GM12878 (cell line): ENCODE measurements at regions of chr19 and their contacts with region 1.

Region 1: GRCh38 chr19:10219678-10220077 is 11.5 kb downstream of the S1PR2 start:
- DNase-seq: peak; percentile 88
- ATAC-seq: peak; percentile 87
- H3K4me3 ChIP-seq: no peak overlapping the region
- H3K27ac ChIP-seq: peak overlapping the region; percentile 92
- H3K4me1 ChIP-seq: peaks cover 42% of the 10 kb centered on the region
- H3K27me3 ChIP-seq: no peaks in the 10 kb centered on the region
- CTCF ChIP-seq: peak; percentile 71 to 73 (median 73)
- EP300 ChIP-seq: peak; percentile 31 to 91; a peak in 3 of 4 replicates
- POLR2A ChIP-seq: peak; percentile 14
- RAD21 ChIP-seq: peak; percentile 68

Region 2: DNA sequence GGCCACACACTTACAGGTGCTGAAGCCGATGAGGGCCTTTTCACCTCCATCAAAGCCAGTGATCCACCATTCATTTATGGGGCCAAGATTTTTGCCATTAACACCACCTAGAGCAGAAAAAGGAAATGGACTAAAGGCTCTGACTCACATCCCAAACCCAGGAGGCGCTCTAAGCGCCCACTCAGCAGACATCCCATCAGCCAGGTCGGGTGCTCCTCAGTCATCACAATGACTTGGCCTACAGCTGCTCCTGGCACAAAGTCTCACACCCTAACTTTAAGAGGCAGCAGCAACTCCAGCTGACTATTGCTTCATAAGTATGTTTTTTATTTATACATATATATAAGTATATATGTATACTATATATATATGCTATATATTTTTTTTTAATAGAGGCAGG is 63.8 kb before region 1 on chr19:
- CTCF ChIA-PET with region 1: no interaction called
- POLR2A ChIA-PET with region 1: no interaction called
- RAD21 ChIA-PET with region 1: no interaction called
- SMC1A ChIA-PET with region 1: no interaction called
- in situ Hi-C with region 1: no loop called
- intact Hi-C with region 1: no loop called
- DNase-seq: no peak
- ATAC-seq: no peak
- H3K4me3 ChIP-seq: no peak overlapping the region
- H3K27ac ChIP-seq: no peak overlapping the region
- H3K4me1 ChIP-seq: no peaks in the 10 kb centered on the region
- H3K27me3 ChIP-seq: no peaks in the 10 kb centered on the region
- CTCF ChIP-seq: no peak
- EP300 ChIP-seq: no peak
- POLR2A ChIP-seq: no peak
- RAD21 ChIP-seq: no peak

Region 3: DNA sequence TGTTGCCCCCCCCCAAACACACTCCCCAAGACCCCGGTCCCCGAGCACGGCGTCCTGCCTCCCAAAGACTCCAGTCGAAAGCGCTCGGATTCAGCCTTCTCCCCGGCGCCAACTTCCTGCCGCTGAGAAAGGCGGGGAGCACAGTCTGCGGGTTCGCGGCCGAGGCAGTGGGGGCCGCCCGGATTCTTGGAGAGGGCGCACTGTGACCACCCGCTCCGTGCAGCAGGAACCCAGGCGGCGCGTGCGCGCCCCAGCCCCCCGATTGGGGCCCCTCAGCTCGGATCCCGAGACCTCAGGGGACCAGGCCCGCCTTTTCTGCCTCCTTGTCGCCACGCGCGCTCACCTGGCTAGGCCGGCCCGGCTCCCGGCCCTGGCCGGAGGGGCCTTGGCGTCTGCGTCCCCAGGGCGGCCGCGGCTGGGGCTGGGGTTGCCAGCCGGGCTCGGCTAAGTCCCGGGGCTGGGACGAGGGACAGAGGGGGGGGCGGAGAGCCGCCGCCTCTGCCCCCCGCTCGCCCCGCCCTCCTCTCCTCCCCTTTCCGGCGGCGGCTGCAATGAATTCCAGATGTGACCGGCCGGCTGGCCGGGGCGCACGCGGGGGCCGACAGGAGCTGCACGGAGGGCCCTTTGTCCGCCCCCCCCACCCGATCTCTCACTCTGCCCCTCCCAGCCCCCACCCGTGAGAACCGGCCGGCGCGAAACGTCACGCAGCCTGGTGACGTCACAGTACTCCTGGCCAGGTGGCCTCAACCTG is 11.4 kb after region 1 on chr19 and contains the start of gene S1PR2:
- CTCF ChIA-PET with region 1: interaction called, 19 read pairs
- POLR2A ChIA-PET with region 1: interaction called, 11 read pairs
- RAD21 ChIA-PET with region 1: interaction called, 25 read pairs
- SMC1A ChIA-PET with region 1: interaction called, 3 read pairs
- in situ Hi-C with region 1: no loop called
- intact Hi-C with region 1: no loop called
- DNase-seq: no peak
- ATAC-seq: peak; percentile 67
- H3K4me3 ChIP-seq: peak within 1 kb of the TSS; percentile 90
- H3K27ac ChIP-seq: peak within 1 kb of the TSS; percentile 97
- H3K4me1 ChIP-seq: peaks cover 44% of the 10 kb centered on the region
- H3K27me3 ChIP-seq: no peaks in the 10 kb centered on the region
- CTCF ChIP-seq: 0 out of 6 replicates have a peak, but pooled peaks of 1 of the 3 experiments have one; percentile 19
- EP300 ChIP-seq: no peak
- POLR2A ChIP-seq: peak; percentile 81
- RAD21 ChIP-seq: no peak
- polyA plus RNA-seq, gene S1PR2: 4.9 to 9.6 TPM

Region 4: GRCh38 chr19:10238172-10238783 is 18.6 kb after region 1 on chr19:
- CTCF ChIA-PET with region 1: interaction called, 5 read pairs
- POLR2A ChIA-PET with region 1: interaction called, 11 read pairs
- RAD21 ChIA-PET with region 1: interaction called, 25 read pairs
- SMC1A ChIA-PET with region 1: interaction called, 8 read pairs
- in situ Hi-C with region 1: no loop called
- intact Hi-C with region 1: no loop called
- DNase-seq: no peak
- ATAC-seq: peak; percentile 47
- H3K4me3 ChIP-seq: no peak overlapping the region
- H3K27ac ChIP-seq: peak overlapping the region; percentile 54
- H3K4me1 ChIP-seq: peaks cover 57% of the 10 kb centered on the region
- H3K27me3 ChIP-seq: no peaks in the 10 kb centered on the region
- CTCF ChIP-seq: no peak
- EP300 ChIP-seq: no peak
- POLR2A ChIP-seq: no peak
- RAD21 ChIP-seq: no peak

Region 5: GRCh38 chr19:10245189-10245939 is 25.7 kb after region 1 on chr19:
- CTCF ChIA-PET with region 1: interaction called, 56 read pairs
- POLR2A ChIA-PET with region 1: interaction called, 8 read pairs
- RAD21 ChIA-PET with region 1: interaction called, 98 read pairs
- SMC1A ChIA-PET with region 1: interaction called, 78 read pairs
- in situ Hi-C with region 1: no loop called
- intact Hi-C with region 1: no loop called
- DNase-seq: no peak
- ATAC-seq: peak; percentile 74
- H3K4me3 ChIP-seq: no peak overlapping the region
- H3K27ac ChIP-seq: peak overlapping the region; percentile 55
- H3K4me1 ChIP-seq: peaks cover 54% of the 10 kb centered on the region
- H3K27me3 ChIP-seq: no peaks in the 10 kb centered on the region
- CTCF ChIP-seq: no peak
- EP300 ChIP-seq: no peak
- POLR2A ChIP-seq: no peak
- RAD21 ChIP-seq: no peak

Region 6: DNA sequence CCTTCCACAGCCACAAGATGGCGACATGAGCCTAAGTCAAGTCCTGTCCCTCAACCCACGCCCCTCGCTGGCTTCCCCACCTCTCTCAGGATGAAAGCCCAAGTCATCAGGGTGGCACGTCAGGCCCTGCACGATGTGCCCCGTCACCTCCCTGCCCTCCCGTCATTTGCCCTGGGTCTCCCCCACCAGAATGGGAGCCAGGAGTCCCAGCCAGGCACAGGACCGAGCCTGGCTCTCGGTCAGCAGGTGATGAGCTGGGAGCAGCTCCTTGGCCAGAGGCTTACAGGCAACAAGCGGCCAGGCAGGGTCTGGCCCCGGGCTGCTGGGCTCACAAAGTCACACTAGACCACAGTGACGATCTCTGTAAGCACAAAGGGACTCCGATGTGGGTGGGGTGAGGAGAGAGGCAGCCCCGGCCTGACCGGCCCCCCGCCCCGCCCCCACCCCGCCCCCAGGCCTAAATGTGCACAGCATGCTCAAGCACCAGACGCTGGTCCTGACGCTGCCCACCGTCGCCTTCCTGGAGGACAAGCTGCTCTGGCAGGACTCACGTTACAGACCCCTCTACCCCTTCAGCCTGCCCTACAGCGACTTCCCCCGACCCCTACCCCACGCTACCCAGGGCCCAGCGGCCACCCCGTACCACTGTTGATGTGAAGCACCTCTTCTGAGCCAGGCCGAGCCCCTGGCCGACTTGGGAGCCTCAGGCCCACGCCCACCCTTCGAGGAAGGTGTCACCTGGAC is 39.7 kb after region 1 on chr19:
- CTCF ChIA-PET with region 1: interaction called, 11 read pairs
- POLR2A ChIA-PET with region 1: no interaction called
- RAD21 ChIA-PET with region 1: interaction called, 4 read pairs
- SMC1A ChIA-PET with region 1: no interaction called
- in situ Hi-C with region 1: no loop called
- intact Hi-C with region 1: no loop called
- DNase-seq: no peak
- ATAC-seq: peak; percentile 91
- H3K4me3 ChIP-seq: no peak overlapping the region
- H3K27ac ChIP-seq: 0 out of 2 replicates have a peak overlapping the region, but pooled peaks have one; percentile 27
- H3K4me1 ChIP-seq: peaks cover 11% of the 10 kb centered on the region
- H3K27me3 ChIP-seq: no peaks in the 10 kb centered on the region
- CTCF ChIP-seq: peak; percentile 71 to 75 (median 73)
- EP300 ChIP-seq: no peak
- POLR2A ChIP-seq: peak; percentile 72
- RAD21 ChIP-seq: peak; percentile 74

Region 7: DNA sequence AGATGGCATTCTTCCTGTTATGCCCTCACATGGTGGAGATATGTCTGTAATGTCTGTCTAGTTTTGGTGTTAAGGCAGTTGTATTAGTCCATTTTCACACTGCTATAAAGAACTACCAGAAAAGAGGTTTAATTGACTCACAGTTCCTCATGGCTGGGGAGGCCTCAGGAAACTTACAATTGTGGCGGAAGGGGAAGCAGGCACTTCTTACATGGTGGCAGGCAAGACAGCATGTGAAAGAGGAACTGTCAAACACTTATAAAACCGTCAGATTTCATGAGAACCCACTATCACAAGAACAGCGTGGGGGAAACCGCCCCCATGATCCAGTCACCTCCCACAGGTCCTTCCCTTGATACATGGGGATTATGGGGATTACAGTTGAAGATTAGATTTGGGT is 1550.3 kb after region 1 on chr19:
- CTCF ChIA-PET with region 1: no interaction called
- POLR2A ChIA-PET with region 1: no interaction called
- RAD21 ChIA-PET with region 1: no interaction called
- SMC1A ChIA-PET with region 1: no interaction called
- in situ Hi-C with region 1: no loop called
- intact Hi-C with region 1: no loop called
- DNase-seq: no peak
- ATAC-seq: no peak
- H3K4me3 ChIP-seq: no peak overlapping the region
- H3K27ac ChIP-seq: no peak overlapping the region
- H3K4me1 ChIP-seq: peaks cover 3% of the 10 kb centered on the region
- H3K27me3 ChIP-seq: no peaks in the 10 kb centered on the region
- CTCF ChIP-seq: no peak
- EP300 ChIP-seq: no peak
- POLR2A ChIP-seq: no peak
- RAD21 ChIP-seq: no peak